Natural killer cell (primary cell): ENCODE measurements at regions of chr9 and their contacts with region 1.

Region 1: GRCh38 chr9:81689343-81690190 is at the start of gene TLE1:
- DNase-seq: peak; percentile 87 to 90
- ATAC-seq: peak; percentile 75 to 89 (median 78)
- H3K4me3 ChIP-seq: peak within 1 kb of the TSS; percentile 66
- H3K4me3 Mint-ChIP-seq: peak within 1 kb of the TSS; percentile 99
- H3K27ac ChIP-seq: peak within 1 kb of the TSS; percentile 71
- H3K27ac Mint-ChIP-seq: peak within 1 kb of the TSS; percentile 93 to 95
- H3K4me1 ChIP-seq: peaks cover 11% of the 10 kb centered on the region
- H3K4me1 Mint-ChIP-seq: peaks cover 5 to 17% of the 10 kb centered on the region in 2 donors
- H3K27me3 ChIP-seq: peaks cover 2% of the 10 kb centered on the region
- H3K27me3 Mint-ChIP-seq: peaks cover 9 to 10% of the 10 kb centered on the region in 2 donors
- CTCF ChIP-seq: no peak
- total RNA-seq, gene TLE1: 38.8 to 58.9 (median 44.5) TPM

Region 2: DNA sequence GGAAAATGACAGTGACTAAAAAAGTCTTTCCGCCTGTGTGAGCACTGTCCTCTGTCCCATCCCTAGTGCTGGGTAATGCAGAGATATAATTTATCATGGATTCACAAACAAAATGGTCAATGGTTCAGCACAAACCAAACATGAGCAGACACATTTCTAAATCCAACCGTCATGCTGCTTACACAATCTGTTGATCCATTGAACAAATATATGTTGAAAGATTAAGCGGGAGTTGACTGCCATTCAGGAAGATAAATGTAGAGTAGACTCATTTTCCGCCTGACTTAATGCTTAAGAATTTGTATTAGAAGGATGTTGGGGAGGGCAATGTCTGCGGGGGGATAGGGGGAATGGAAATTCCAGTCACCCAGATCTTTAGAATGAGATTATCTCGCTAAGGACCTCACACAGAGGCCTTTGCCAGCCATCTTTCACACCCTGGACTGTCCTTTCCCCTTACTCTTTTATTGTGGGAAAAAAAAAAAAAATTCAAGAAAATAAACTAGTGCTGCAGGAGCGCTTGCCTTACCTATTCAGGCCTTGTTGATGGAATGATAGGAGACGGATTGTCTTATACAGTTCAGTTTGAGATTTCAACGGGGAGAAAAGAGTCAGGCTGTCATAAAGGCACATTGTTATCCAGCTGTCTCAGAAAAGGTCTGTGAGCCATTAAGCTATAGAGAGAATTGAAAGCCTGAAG is 153.9 kb before region 1 on chr9:
- intact Hi-C with region 1: loop called (anchors 5 kb)
- DNase-seq: no peak
- ATAC-seq: no peak
- H3K4me3 ChIP-seq: no peak overlapping the region
- H3K4me3 Mint-ChIP-seq: no peak overlapping the region
- H3K27ac ChIP-seq: no peak overlapping the region
- H3K27ac Mint-ChIP-seq: no peak overlapping the region
- H3K4me1 ChIP-seq: no peaks in the 10 kb centered on the region
- H3K4me1 Mint-ChIP-seq: peaks cover 19 to 23% of the 10 kb centered on the region in 2 donors
- H3K27me3 ChIP-seq: no peaks in the 10 kb centered on the region
- H3K27me3 Mint-ChIP-seq: peaks cover 13 to 20% of the 10 kb centered on the region in 2 donors
- CTCF ChIP-seq: no peak

Region 3: DNA sequence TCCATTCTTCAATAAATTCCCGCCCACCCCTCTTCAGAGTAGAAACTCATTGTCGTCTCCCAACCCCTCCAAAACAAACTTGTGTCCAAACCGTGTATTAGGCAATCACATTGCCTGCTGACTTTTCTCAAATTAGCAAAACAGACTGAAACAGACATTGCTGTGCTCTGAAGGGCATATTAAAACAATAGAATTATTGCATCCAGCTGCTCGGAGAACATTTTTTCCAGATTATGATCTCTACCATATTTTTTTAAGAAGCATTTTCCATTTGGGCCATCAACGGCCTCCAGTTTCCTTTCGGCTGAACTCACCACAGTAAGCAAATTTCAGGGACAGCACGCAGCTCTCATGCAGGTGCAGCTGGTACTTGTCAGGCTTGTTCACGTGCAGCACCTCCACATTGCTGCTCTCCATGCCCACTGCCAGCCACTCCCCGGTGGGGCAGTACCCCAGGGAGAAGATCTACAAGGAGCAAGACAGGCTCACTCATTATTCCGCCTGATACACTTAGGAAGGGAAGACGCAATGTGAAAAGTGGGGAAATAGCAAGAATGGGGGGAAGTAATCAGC is 104.3 kb before region 1 on chr9:
- intact Hi-C with region 1: no loop called
- DNase-seq: no peak
- ATAC-seq: no peak
- H3K4me3 ChIP-seq: no peak overlapping the region
- H3K4me3 Mint-ChIP-seq: no peak overlapping the region
- H3K27ac ChIP-seq: no peak overlapping the region
- H3K27ac Mint-ChIP-seq: no peak overlapping the region
- H3K4me1 ChIP-seq: no peaks in the 10 kb centered on the region
- H3K4me1 Mint-ChIP-seq: no peaks in the 10 kb centered on the region
- H3K27me3 ChIP-seq: no peaks in the 10 kb centered on the region
- H3K27me3 Mint-ChIP-seq: no peaks in the 10 kb centered on the region
- CTCF ChIP-seq: no peak

Region 4: GRCh38 chr9:81596679-81597418 is 92.7 kb before region 1 on chr9:
- intact Hi-C with region 1: loop called (anchors 1 kb)
- DNase-seq: peak; percentile 31
- ATAC-seq: peak; percentile 81 to 90 (median 87)
- H3K4me3 ChIP-seq: no peak overlapping the region
- H3K4me3 Mint-ChIP-seq: peak overlapping the region; percentile 86
- H3K27ac ChIP-seq: peak overlapping the region; percentile 72
- H3K27ac Mint-ChIP-seq: peak overlapping the region; percentile 86 to 87
- H3K4me1 ChIP-seq: peaks cover 40% of the 10 kb centered on the region
- H3K4me1 Mint-ChIP-seq: peaks cover 53 to 70% of the 10 kb centered on the region in 2 donors
- H3K27me3 ChIP-seq: no peaks in the 10 kb centered on the region
- H3K27me3 Mint-ChIP-seq: no peaks in the 10 kb centered on the region
- CTCF ChIP-seq: no peak

Region 5: GRCh38 chr9:81619348-81620001 is 70.1 kb before region 1 on chr9:
- intact Hi-C with region 1: loop called (anchors 5 kb)
- DNase-seq: no peak
- ATAC-seq: peak; percentile 33 to 67 (median 61)
- H3K4me3 ChIP-seq: no peak overlapping the region
- H3K4me3 Mint-ChIP-seq: peak overlapping the region; percentile 85
- H3K27ac ChIP-seq: peak overlapping the region; percentile 57
- H3K27ac Mint-ChIP-seq: peak overlapping the region; percentile 88 to 89
- H3K4me1 ChIP-seq: peaks cover 20% of the 10 kb centered on the region
- H3K4me1 Mint-ChIP-seq: peaks cover 53 to 57% of the 10 kb centered on the region in 2 donors
- H3K27me3 ChIP-seq: no peaks in the 10 kb centered on the region
- H3K27me3 Mint-ChIP-seq: no peaks in the 10 kb centered on the region
- CTCF ChIP-seq: no peak